K562 (cell line): ENCODE measurements at regions of chr1 and their contacts with region 1.

Region 1: DNA sequence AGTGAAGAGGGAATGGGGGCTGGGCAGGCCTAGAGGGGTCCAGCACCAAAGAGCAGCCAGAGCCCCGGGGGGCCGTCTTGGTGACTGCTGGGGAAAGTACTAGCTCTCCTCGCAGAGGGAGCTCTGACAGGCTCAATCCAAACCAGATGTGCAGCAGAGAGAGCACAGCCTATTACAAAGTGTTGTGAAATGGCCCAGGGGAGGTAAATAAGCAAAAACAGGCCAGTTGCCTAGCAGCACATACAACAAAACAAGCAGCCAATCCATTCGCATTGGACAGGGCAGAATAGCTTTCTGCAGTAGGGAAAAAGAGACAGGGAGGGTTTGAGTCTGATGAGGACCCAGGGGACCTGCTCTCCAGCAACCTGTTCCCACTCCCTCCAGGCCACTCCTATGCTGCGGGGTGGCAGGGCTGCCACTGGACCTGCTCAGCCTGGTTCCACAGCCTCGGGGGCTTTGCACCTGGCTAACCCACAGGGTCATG is 239.6 kb upstream of the FGGY start:
- DNase-seq: no peak
- ATAC-seq: peak; percentile 63
- H3K4me3 ChIP-seq: no peak overlapping the region
- H3K27ac ChIP-seq: no peak overlapping the region
- H3K4me1 ChIP-seq: peaks cover 0 to 19% of the 10 kb centered on the region in 2 experiments; a peak in 4 of 5 replicates
- H3K27me3 ChIP-seq: peaks cover 0 to 11% of the 10 kb centered on the region in 2 experiments; a peak in 3 of 5 replicates
- CTCF ChIP-seq: no peak
- EP300 ChIP-seq: no peak
- POLR2A ChIP-seq: no peak
- RAD21 ChIP-seq: no peak

Region 2: DNA sequence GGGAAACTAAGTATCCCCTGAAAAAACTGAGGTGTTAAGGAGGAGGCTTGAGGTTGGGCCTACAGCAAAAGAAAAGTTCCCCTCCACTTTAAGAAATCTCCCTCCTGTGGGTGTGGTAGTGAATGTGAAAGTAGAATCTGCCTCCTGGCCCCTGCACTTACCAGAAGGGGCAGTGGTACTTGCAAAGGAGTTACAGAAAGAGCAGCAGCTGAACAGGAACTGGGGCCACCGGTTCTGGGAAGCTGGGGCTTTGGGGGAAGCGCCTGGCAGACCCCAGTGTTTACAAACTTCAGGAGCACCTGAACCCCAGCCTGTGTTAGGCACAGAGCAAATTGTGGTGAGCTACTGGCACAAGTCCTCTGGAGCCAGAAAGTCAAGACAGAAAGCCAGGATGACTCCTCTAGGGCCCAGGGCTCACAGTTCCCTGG is 10.5 kb before region 1 on chr1:
- CTCF ChIA-PET with region 1: no interaction called
- POLR2A ChIA-PET with region 1: interaction called, 11 read pairs
- in situ Hi-C with region 1: no loop called
- intact Hi-C with region 1: no loop called
- DNase-seq: no peak
- ATAC-seq: no peak
- H3K4me3 ChIP-seq: no peak overlapping the region
- H3K27ac ChIP-seq: no peak overlapping the region
- H3K4me1 ChIP-seq: peaks cover 3 to 12% of the 10 kb centered on the region in 2 experiments; a peak in 4 of 5 replicates
- H3K27me3 ChIP-seq: peaks cover 0 to 5% of the 10 kb centered on the region in 2 experiments; a peak in 1 of 5 replicates
- CTCF ChIP-seq: no peak
- EP300 ChIP-seq: no peak
- POLR2A ChIP-seq: no peak
- RAD21 ChIP-seq: no peak